Tibial artery (tissue), 4 donors: ENCODE measurements at regions of chr15 and their contacts with region 1.

Region 1: DNA sequence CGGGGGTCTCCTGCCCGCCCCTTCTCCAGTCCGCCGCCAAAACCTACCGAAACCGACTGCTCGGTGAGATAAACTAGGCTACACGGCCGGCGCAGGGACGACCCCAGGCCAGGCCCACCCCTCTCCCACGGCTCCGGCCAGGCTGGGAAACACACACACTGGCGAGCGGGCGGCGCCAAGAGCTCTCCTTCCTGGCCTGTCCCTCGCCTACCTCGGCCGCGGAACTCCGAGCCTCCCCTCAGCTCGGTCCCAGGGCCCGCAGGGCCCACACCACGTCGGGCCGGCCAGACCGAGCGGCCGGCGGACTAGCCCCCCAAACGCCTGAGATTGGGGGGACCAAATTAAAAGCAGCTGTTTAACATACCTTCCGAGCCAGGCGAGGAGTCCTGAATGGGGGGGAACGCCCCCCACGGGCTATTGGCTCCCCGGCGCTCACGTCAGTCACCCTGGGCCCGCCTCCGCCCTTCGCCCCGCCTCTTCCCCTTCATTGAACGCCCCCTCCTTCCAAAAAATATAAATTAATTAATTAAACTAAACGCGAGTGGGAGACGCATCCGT is 4.0 kb upstream of the SIN3A start:
- DNase-seq: peak; percentile 90 to 94
- H3K4me3 ChIP-seq: peak overlapping the region; percentile 72 to 88
- H3K27ac ChIP-seq: peak overlapping the region; percentile 89 to 96
- H3K4me1 ChIP-seq: peaks cover 0 to 19% (median 9%) of the 10 kb centered on the region in 4 donors
- H3K27me3 ChIP-seq: no peaks in the 10 kb centered on the region
- CTCF ChIP-seq: no peak

Region 2: DNA sequence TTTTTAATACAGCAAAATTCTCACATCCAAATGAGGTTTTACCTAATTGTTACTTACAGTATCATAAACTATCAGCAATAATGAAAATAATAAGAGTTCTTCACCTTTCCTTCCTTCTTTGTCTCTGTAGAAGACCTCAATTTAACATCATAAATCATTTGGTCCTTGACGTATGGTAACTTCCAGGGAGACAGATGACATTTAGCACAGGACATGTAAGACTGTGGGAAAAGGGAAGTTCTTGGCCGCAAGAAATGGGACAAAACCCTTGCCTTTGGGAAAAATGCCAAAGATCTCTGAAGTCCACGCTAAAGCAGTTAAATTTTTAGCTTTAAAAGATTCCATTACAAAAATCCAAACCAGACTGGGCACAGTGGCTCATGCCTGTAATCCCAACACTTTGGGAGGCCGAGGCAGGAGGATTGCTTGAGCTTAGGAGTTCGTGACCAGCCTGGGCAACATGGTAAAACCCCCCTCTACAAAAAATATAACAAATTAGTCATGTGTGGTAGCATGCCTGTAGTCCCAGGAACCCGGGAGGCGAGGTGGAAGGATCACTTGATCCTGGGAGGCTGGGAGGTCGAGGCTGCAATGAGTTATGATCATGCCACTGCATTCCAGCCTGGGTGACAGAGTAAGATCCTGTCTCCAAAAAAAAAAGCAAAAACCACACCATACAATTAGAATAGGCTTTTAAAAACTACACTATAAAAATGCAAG is 114.8 kb after region 1 on chr15:
- intact Hi-C with region 1: loop called (anchors 5 kb)
- DNase-seq: no peak
- H3K4me3 ChIP-seq: no peak overlapping the region
- H3K27ac ChIP-seq: no peak overlapping the region
- H3K4me1 ChIP-seq: peaks cover 0 to 11% (median 8%) of the 10 kb centered on the region in 4 donors
- H3K27me3 ChIP-seq: no peaks in the 10 kb centered on the region
- CTCF ChIP-seq: no peak